Naive thymus-derived CD8-positive, alpha-beta T cell (primary cell): ENCODE measurements at regions of chrX and their contacts with region 1.

Region 1: GRCh38 chrX:154458114-154458953 is at the start of gene PLXNA3:
- DNase-seq: peak; percentile 33 to 83 (median 69)
- ATAC-seq: peak; percentile 77 to 84
- H3K4me3 Mint-ChIP-seq: peak within 1 kb of the TSS; percentile 89 to 99 (median 93)
- H3K27ac Mint-ChIP-seq: peak within 1 kb of the TSS; percentile 58 to 99 (median 94)
- H3K4me1 Mint-ChIP-seq: peaks cover 8 to 28% (median 19%) of the 10 kb centered on the region in 4 donors
- H3K27me3 Mint-ChIP-seq: no peaks in the 10 kb centered on the region
- polyA plus RNA-seq, gene PLXNA3: 0.27 to 0.67 (median 0.36) TPM

Region 2: GRCh38 chrX:154443992-154444754 is 14.2 kb before region 1 on chrX and contains the start of gene FAM50A:
- POLR2A ChIA-PET with region 1: interaction called, 10 read pairs
- DNase-seq: peak; percentile 50 to 78 (median 60)
- ATAC-seq: peak; percentile 81 to 83
- H3K4me3 Mint-ChIP-seq: peak within 1 kb of the TSS; percentile 54 to 85 (median 77)
- H3K27ac Mint-ChIP-seq: peak within 1 kb of the TSS; percentile 45 to 95 (median 79)
- H3K4me1 Mint-ChIP-seq: peaks cover 1 to 31% (median 15%) of the 10 kb centered on the region in 4 donors
- H3K27me3 Mint-ChIP-seq: no peaks in the 10 kb centered on the region
- polyA plus RNA-seq, gene FAM50A: 25.1 to 45.6 (median 40.4) TPM

Region 3: DNA sequence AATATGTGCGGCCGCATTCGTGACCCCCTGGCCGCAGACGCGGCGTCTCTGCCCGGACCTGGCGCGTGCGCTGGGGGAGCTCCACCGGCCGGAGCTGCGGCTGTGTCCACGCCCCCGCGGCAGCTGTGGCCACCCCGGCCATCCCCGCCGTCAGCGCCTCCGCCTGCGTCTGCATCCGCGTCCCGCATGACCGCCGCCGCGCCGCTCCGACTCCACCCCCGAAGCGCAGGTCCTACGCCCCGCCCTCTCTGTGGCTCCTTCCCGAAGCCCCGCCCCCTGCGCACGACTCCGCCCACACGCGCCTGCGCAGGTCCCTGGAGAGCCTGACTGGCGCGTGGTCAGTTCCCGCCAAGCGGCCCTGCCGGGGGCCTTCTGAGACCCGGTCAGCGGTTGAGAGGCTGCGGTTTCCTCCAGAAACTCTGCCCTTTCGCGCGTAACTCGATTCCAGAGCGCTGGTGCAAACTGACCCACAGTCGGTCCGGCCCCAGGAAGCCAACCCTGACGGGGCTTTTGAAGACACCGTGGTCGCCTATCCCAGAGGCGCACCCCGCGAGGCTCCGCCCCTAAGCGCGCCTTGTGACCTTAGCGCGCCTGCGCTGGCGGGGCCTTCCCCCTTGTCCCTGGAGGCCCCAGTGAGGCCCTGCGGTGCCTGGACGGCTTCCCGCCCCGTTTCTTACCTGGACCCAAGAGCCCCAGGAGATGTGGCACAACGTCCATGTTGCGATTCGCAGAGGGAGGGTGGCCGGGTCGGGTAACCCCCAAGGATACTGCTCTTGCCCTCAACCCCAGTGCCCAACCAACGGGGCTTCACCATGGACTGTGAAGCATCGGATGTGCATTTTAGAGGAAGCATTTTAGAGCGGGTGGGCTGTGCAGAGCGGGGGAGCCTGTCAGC is 20.6 kb after region 1 on chrX and contains the start of gene LAGE3:
- POLR2A ChIA-PET with region 1: interaction called, 12 read pairs
- DNase-seq: peak; percentile 84 to 98 (median 92)
- ATAC-seq: peak; percentile 89 to 91
- H3K4me3 Mint-ChIP-seq: peak within 1 kb of the TSS; percentile 79 to 91 (median 83)
- H3K27ac Mint-ChIP-seq: peak within 1 kb of the TSS; percentile 75 to 95 (median 90)
- H3K4me1 Mint-ChIP-seq: peaks cover 0 to 34% (median 23%) of the 10 kb centered on the region in 4 donors
- H3K27me3 Mint-ChIP-seq: no peaks in the 10 kb centered on the region
- polyA plus RNA-seq, gene LAGE3: 62.6 to 81.8 (median 72.7) TPM

Region 4: DNA sequence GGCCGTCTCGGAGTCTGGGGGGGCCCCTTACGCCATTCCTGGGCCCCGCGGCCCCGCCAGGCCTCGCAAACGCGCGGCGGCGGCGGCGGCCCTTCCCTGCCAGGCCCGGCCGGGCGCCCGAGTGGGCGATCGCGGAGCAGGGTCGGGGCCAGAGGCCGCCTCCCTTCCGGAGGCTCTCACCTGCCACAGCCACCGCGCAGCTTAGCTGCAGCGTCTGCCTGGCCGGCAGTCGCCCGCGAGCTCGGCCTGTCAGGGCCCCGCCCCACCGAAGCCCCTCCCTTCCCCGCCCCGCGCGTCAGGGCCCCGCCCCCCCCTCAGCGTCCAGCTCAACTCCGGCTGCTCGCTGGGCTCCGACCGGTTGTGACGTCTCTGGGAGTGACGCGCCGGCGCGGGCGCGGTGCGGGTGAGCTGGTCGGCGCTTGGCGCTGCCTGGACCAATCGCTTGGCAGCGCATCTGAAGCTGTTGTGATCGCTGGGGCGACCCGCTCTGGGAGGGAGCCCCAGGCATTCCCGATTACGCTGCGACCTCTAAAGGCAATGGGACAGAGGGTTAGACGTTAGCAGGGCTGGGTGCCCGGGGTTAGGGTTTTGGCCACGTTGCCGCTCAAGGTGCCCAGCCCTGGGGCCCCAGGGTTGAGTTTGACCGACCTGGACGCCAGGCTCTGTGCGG is 32.2 kb after region 1 on chrX and contains the start of gene SLC10A3:
- POLR2A ChIA-PET with region 1: interaction called, 11 read pairs
- DNase-seq: peak; percentile 72 to 93 (median 81)
- ATAC-seq: peak; percentile 80 to 83
- H3K4me3 Mint-ChIP-seq: peak within 1 kb of the TSS; percentile 83 to 93 (median 87)
- H3K27ac Mint-ChIP-seq: peak within 1 kb of the TSS; percentile 73 to 96 (median 94)
- H3K4me1 Mint-ChIP-seq: peaks cover 4 to 30% (median 20%) of the 10 kb centered on the region in 4 donors
- H3K27me3 Mint-ChIP-seq: no peaks in the 10 kb centered on the region
- polyA plus RNA-seq, gene SLC10A3: 30.5 to 42.3 (median 35.9) TPM